Calu3 (cell line): ENCODE measurements at regions of chr14 and their contacts with region 1.

Region 1: GRCh38 chr14:89040460-89041259 is 216.2 kb downstream of the TTC8 start:
- DNase-seq: peak; percentile 89
- H3K4me3 Mint-ChIP-seq: peak overlapping the region; percentile 74
- H3K27ac Mint-ChIP-seq: peak overlapping the region; percentile 41
- H3K4me1 Mint-ChIP-seq: peaks cover 9% of the 10 kb centered on the region
- H3K27me3 Mint-ChIP-seq: peaks cover 20% of the 10 kb centered on the region
- CTCF ChIP-seq: peak; percentile 87

Region 2: GRCh38 chr14:89013084-89013504 is 27.6 kb before region 1 on chr14:
- CTCF ChIA-PET with region 1: no interaction called
- intact Hi-C with region 1: no loop called
- DNase-seq: peak; percentile 69
- H3K4me3 Mint-ChIP-seq: peak overlapping the region; percentile 84
- H3K27ac Mint-ChIP-seq: peak overlapping the region; percentile 27
- H3K4me1 Mint-ChIP-seq: peaks cover 10% of the 10 kb centered on the region
- H3K27me3 Mint-ChIP-seq: peaks cover 21% of the 10 kb centered on the region
- CTCF ChIP-seq: no peak

Region 3: GRCh38 chr14:89137514-89138163 is 97.0 kb after region 1 on chr14:
- CTCF ChIA-PET with region 1: interaction called, 3 read pairs
- intact Hi-C with region 1: loop called (anchors 5 kb)
- DNase-seq: peak; percentile 92
- H3K4me3 Mint-ChIP-seq: peak overlapping the region; percentile 21
- H3K27ac Mint-ChIP-seq: peak overlapping the region; percentile 56
- H3K4me1 Mint-ChIP-seq: peaks cover 26% of the 10 kb centered on the region
- H3K27me3 Mint-ChIP-seq: no peaks in the 10 kb centered on the region
- CTCF ChIP-seq: no peak

Region 4: DNA sequence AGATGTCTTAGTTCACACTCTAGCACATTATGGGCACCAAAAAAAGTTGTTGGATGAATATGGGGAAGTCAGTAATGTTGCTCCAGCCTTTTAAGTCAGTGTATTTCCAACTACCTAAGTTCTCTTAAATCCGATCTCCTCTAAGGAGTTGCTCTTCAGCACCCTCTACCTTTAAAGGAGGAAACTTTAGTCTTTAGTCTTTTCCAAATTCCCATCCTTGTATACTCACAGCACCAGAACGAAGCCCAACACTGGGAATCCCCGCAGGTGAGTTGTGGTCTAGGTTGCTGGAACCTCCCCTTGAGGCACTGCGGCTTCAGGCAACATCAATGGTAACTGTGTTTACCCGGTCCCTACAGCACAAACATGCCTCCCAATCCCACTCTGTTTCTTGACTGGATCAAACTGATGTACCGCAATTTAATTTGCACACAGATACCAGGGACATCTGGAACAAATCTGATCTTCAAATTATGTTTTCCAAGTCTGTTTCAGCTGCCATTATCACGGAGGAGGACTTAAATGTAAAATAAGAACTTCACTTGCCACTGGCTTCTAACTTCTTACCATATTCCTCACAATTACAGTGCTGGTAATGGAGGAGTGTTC is 197.4 kb after region 1 on chr14:
- CTCF ChIA-PET with region 1: no interaction called
- intact Hi-C with region 1: loop called (anchors 1 kb)
- DNase-seq: no peak
- H3K4me3 Mint-ChIP-seq: no peak overlapping the region
- H3K27ac Mint-ChIP-seq: no peak overlapping the region
- H3K4me1 Mint-ChIP-seq: no peaks in the 10 kb centered on the region
- H3K27me3 Mint-ChIP-seq: no peaks in the 10 kb centered on the region
- CTCF ChIP-seq: no peak

Region 5: DNA sequence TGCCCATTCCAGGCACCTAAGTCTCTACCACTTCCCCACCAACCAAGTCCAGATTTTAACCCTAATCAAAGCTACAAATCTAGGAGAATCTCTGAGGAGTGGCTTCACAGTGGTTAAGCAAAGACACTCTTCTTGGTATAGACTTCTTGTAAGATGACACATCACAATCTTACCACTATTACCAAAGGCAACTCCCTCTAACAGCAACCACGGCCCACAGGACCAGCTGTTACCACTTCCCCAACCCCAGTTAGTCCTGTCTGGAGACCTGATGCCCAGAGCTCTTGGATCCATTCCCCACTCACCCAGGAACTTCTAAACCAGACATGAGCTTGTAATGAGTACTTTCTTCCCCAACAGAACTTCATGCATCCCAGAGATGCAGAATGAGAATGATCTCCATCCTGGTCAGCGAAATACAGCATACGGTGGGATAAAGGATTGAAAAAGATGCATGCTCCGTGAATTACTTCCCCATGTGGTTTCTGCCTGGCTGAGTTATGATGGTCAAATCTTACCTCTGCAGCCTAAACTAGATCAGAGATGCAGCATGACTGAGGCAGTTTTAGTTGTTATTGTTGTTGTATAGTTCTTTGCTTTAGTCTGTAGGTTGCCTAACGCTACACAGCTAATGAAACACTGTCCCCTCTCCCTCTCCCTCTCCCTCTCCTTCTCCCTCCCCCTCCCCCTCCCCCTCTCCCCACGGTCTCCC is 464.1 kb after region 1 on chr14:
- CTCF ChIA-PET with region 1: no interaction called
- intact Hi-C with region 1: loop called (anchors 5 kb)
- DNase-seq: no peak
- H3K4me3 Mint-ChIP-seq: no peak overlapping the region
- H3K27ac Mint-ChIP-seq: no peak overlapping the region
- H3K4me1 Mint-ChIP-seq: peaks cover 22% of the 10 kb centered on the region
- H3K27me3 Mint-ChIP-seq: no peaks in the 10 kb centered on the region
- CTCF ChIP-seq: no peak

Region 6: GRCh38 chr14:89915114-89915878 is 874.6 kb after region 1 on chr14:
- CTCF ChIA-PET with region 1: interaction called, 8 read pairs
- intact Hi-C with region 1: loop called (anchors 1 kb)
- DNase-seq: peak; percentile 56
- H3K4me3 Mint-ChIP-seq: no peak overlapping the region
- H3K27ac Mint-ChIP-seq: no peak overlapping the region
- H3K4me1 Mint-ChIP-seq: peaks cover 27% of the 10 kb centered on the region
- H3K27me3 Mint-ChIP-seq: no peaks in the 10 kb centered on the region
- CTCF ChIP-seq: peak; percentile 77

Region 7: DNA sequence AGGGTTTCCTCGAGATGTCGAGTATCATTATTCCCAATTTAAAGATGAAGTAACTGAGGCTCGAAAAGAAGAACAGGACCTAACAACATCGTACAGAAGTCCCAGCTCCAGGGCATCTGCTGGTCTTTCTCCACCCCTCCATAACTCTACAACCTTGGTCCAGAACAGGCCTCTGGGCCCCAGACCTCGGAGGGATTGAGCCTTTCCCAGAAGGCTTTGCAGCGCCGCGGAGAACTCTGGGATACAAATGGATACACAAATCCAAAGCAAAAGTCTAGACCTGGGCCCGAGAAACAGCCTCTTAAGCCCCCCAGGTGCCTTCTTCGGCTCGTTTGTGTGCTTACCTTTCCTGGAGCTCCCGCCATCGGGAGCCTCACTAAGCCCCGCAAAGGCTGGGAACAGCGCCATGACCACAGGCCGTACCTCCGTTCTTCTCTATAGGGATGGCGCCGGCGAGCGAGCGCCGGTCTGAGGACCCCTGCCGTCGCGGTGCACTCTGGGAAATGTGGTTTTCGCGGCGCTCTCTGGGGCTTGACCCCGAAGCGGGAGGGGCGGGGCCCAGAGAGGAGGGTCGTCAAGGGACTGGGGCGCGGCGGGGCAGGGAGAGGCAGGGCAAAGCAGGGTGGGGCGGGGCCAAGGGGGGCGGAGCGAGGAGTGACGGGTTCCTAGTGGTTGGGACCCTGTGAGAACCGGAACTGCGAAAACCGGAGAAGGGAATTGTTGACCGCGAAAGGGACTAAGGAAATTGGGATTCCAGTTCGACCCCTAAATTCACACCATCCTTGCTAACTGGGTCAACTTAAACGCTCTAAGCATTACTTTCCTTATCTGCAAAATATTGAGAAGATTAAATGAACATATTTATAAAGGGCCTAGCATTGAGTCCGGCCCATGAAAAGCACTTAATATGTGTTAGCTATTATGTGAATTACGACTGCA is 1291.1 kb after region 1 on chr14 and contains the start of gene NRDE2:
- CTCF ChIA-PET with region 1: no interaction called
- intact Hi-C with region 1: no loop called
- DNase-seq: peak; percentile 99
- H3K4me3 Mint-ChIP-seq: peak within 1 kb of the TSS; percentile 80
- H3K27ac Mint-ChIP-seq: peak within 1 kb of the TSS; percentile 83
- H3K4me1 Mint-ChIP-seq: peaks cover 22% of the 10 kb centered on the region
- H3K27me3 Mint-ChIP-seq: no peaks in the 10 kb centered on the region
- CTCF ChIP-seq: no peak
- total RNA-seq, gene NRDE2: 18.3 and 19.2 TPM in 2 replicates